ENCODE measurements at regions of chr17 and their contacts with region 1.

Region 1: DNA sequence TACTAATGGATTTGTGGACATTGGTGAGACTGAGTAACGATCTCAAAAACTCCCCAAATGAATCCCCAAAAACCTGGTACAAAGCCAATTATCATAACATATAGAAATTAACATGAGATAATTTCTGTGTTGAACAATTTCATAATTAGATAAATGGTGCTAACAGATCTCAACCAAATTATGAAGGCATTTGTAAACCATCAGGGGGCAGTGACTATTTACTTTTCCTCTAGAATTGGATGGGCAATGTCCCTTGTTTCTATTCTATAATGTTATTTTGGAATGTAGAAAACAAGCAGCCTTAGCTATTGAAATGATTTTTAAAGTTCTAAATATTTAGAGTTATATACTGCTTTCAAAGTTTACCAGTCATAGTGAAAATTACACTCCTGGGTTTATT is 57.8 kb downstream of the MYH10 start:
- DNase-seq: no peak
- ATAC-seq: no peak
- H3K4me3 ChIP-seq: no peak overlapping the region
- H3K27ac ChIP-seq: no peak overlapping the region
- H3K4me1 ChIP-seq: no peaks in the 10 kb centered on the region
- H3K27me3 ChIP-seq: no peaks in the 10 kb centered on the region
- CTCF ChIP-seq: peak in 11 of 12 donors; percentile 18 to 60 (median 45)
- POLR2A ChIP-seq: no peak

Region 2: DNA sequence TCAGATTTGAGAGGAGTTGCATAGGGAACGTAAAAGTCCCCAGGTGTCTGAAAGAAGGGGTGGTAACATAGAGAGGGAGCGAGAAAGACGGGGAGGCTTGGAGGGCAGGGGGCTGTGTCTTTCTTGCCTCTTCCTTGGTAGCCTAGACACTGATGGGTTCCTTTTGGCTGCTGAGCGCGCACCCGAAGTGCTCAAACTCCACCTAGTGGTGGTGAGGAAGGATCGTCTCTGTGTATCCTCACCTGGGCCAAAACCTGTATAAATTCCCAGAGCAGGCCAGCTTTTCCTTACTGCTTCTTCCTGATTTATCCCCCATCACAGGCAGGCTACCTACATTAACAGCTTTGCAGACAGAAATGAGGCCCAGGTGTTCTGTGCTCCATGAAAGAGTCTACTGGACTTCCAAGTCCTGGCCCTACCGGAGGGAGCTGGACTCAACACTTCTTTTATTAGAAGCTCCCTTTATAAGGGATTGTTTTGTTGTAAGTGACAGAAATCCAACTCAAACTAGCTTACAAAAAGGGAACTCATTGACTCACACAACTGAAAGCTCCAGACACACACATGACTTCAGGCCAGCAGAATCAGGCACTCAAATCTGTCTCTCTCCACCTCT is 272.0 kb before region 1 on chr17:
- intact Hi-C with region 1: no loop called
- DNase-seq: peak in 4 of 5 donors; percentile 51 to 79 (median 62)
- ATAC-seq: peak; percentile 82 to 92 (median 90)
- H3K4me3 ChIP-seq: no peak overlapping the region
- H3K27ac ChIP-seq: no peak overlapping the region
- H3K4me1 ChIP-seq: peaks cover 0 to 6% (median 0%) of the 10 kb centered on the region in 12 donors
- H3K27me3 ChIP-seq: no peaks in the 10 kb centered on the region
- CTCF ChIP-seq: peak; percentile 74 to 87 (median 80)
- POLR2A ChIP-seq: no peak

Region 3: GRCh38 chr17:8649157-8650118 is 76.7 kb after region 1 on chr17:
- intact Hi-C with region 1: loop called in 1 of 10 experiments (anchors 10 kb)
- DNase-seq: peak in 3 of 5 donors; percentile 15 to 62 (median 30)
- ATAC-seq: peak in 3 of 4 donors; percentile 81 to 96 (median 88)
- H3K4me3 ChIP-seq: no peak overlapping the region
- H3K27ac ChIP-seq: peak overlapping the region in 4 of 12 donors; percentile 18 to 82 (median 44)
- H3K4me1 ChIP-seq: peaks cover 0 to 13% (median 0%) of the 10 kb centered on the region in 12 donors
- H3K27me3 ChIP-seq: no peaks in the 10 kb centered on the region
- CTCF ChIP-seq: no peak
- POLR2A ChIP-seq: no peak

Region 4: DNA sequence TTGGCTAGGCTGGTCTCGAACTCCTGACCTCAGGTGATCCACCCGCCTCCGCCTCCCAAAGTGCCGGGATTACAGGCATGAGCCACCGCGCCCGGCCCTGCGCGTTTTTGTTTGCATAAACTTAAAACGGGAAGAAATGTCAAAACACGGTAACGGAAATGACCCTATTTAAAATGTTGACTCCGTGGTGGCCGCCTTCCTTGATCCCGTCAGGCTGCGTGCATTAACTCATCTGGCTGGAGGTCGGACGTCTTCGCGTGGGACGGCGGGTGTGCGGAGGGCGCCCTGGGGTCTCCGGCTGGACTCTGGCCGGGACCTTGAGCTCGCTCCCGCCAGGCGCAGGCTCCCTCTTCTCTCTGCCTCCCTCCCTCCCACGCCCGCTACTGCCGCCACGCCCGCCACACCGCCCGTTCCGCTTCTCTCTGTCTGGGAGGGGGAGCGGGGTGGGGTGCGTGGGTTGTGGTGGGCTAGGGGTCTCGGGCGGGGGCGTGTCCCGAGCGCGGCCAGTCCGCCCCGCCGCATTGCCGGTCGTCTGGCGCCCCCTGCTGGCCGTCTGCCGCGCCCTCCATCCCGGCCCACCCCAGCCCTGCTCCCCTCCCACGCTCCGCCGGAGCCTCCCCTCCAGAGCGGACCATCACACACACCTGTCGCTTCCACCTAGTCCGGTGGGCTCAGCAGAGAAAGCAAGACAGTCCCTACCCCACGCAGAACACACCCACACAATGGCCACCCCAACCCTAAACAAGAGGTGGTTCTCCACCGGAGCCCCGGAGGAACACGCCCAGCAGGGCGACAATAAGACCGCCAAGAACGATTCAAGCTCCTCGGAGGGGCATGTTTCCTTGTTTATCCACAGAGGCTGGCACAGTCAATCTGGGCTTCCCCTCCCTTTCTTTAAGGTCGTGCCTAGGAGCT is 173.1 kb after region 1 on chr17:
- intact Hi-C with region 1: loop called (anchors 1 to 2 kb)
- DNase-seq: peak; percentile 69 to 90 (median 73)
- ATAC-seq: peak; percentile 67 to 95 (median 92)
- H3K4me3 ChIP-seq: peak overlapping the region; percentile 50 to 82 (median 64)
- H3K27ac ChIP-seq: peak overlapping the region in 8 of 12 donors; percentile 0 to 68 (median 48)
- H3K4me1 ChIP-seq: peaks cover 0 to 15% (median 4%) of the 10 kb centered on the region in 12 donors
- H3K27me3 ChIP-seq: no peaks in the 10 kb centered on the region
- CTCF ChIP-seq: peak; percentile 84 to 98 (median 96)
- POLR2A ChIP-seq: no peak

Region 5: GRCh38 chr17:8785547-8786413 is 213.0 kb after region 1 on chr17:
- intact Hi-C with region 1: loop called in 1 of 10 experiments (anchors 5 kb)
- DNase-seq: peak; percentile 68 to 83 (median 76)
- ATAC-seq: peak in 3 of 4 donors; percentile 91 to 92 (median 91)
- H3K4me3 ChIP-seq: no peak overlapping the region
- H3K27ac ChIP-seq: no peak overlapping the region
- H3K4me1 ChIP-seq: peaks cover 0 to 20% (median 0%) of the 10 kb centered on the region in 12 donors
- H3K27me3 ChIP-seq: no peaks in the 10 kb centered on the region
- CTCF ChIP-seq: peak; percentile 72 to 91 (median 88)
- POLR2A ChIP-seq: no peak